ENCODE measurements at regions of chr9 and their contacts with region 1.

Region 1: GRCh38 chr9:131733541-131734061 is 6.3 kb downstream of the RAPGEF1 start:
- DNase-seq: no peak
- ATAC-seq: no peak
- H3K4me3 Mint-ChIP-seq: peak overlapping the region; percentile 79
- H3K27ac Mint-ChIP-seq: peak overlapping the region; percentile 89
- H3K4me1 Mint-ChIP-seq: peaks cover 92% of the 10 kb centered on the region
- H3K27me3 Mint-ChIP-seq: no peaks in the 10 kb centered on the region
- CTCF ChIP-seq: no peak

Region 2: DNA sequence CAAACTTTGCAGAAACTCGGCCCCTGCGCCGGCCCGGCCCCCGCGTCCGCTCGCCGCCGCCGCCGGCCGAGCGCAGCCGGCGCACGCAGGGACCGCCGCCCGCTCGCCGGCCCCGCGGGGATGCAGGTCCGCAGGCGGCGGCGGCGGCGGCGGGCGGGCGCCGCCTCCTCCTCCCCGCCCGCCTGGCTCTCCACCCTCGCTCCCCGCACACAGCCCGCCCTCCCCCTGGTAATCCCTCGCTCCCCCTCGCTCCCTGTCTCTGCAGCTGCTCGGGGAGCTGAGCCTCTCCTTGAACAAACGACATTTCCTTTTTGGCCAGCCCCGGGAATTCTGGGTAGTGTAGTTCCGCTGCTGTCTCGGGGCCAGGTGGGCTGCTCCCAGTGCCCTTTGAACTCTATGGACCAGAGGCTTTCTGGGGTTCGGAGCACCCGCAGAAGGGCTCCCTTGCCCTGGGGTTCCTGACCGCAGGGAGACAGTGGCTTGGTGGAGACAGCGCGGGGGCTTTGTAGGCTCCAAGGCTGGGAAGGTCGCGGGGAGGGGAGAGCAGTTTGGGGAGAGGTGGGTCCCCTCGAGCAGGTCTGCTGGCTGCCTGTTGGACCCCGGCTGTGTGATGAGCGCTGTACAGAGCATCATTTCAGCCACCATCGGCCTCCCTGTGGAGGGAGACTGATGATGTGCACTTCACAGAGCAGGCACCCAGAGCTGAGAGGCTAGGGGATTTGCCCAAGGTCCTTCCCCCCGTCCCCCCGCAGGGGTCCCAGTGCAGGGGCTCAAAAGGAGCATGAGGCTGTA is 455.5 kb before region 1 on chr9:
- CTCF ChIA-PET with region 1: no interaction called
- POLR2A ChIA-PET with region 1: no interaction called
- intact Hi-C with region 1: loop called (anchors 10 kb)
- DNase-seq: peak; percentile 48
- ATAC-seq: peak; percentile 48
- H3K4me3 Mint-ChIP-seq: peak overlapping the region; percentile 91
- H3K27ac Mint-ChIP-seq: peak overlapping the region; percentile 80
- H3K4me1 Mint-ChIP-seq: peaks cover 37% of the 10 kb centered on the region
- H3K27me3 Mint-ChIP-seq: peaks cover 12% of the 10 kb centered on the region
- CTCF ChIP-seq: no peak

Region 3: DNA sequence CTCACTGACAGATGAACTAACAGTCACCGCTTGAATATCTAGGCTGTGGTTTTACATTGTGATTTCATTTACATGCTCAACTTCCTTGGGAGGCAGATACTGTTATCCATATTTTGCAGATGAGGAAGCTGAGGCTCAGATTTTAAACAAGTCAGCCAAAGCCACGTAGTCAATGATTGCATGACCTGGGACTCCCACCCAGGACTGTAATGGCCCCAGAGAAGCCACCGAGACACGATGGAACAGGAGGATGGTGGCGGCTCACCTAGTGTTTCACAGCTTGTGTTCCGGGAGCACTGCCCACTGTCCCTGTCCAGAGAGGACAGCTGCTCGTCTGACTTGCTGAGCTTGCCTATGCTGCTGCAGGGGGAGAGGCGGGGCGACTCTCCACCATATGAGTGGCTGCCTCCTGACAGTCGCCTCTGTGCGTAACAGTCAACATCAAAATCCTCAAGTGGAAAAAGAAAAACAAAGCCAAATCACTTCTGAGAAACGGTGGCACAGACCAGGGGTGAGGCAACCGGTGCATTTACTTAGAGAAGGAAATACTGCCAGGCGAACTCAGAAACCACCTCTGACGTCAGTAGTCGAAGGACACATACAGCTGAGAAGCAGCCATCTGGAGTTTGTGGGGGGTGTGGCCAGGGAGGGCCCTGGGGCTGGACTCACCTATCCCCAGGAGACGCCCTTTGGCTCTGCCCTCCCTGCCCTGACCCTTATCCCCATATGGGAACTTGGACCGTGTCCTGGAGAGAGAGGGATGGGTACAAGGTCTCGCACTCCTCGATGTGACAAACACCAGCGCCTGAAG is 105.7 kb before region 1 on chr9:
- CTCF ChIA-PET with region 1: interaction called, 36 read pairs
- POLR2A ChIA-PET with region 1: interaction called, 567 read pairs
- intact Hi-C with region 1: loop called (anchors 1 kb)
- DNase-seq: peak; percentile 55
- ATAC-seq: peak; percentile 68
- H3K4me3 Mint-ChIP-seq: peak overlapping the region; percentile 74
- H3K27ac Mint-ChIP-seq: peak overlapping the region; percentile 93
- H3K4me1 Mint-ChIP-seq: peaks cover 71% of the 10 kb centered on the region
- H3K27me3 Mint-ChIP-seq: no peaks in the 10 kb centered on the region
- CTCF ChIP-seq: no peak

Region 4: DNA sequence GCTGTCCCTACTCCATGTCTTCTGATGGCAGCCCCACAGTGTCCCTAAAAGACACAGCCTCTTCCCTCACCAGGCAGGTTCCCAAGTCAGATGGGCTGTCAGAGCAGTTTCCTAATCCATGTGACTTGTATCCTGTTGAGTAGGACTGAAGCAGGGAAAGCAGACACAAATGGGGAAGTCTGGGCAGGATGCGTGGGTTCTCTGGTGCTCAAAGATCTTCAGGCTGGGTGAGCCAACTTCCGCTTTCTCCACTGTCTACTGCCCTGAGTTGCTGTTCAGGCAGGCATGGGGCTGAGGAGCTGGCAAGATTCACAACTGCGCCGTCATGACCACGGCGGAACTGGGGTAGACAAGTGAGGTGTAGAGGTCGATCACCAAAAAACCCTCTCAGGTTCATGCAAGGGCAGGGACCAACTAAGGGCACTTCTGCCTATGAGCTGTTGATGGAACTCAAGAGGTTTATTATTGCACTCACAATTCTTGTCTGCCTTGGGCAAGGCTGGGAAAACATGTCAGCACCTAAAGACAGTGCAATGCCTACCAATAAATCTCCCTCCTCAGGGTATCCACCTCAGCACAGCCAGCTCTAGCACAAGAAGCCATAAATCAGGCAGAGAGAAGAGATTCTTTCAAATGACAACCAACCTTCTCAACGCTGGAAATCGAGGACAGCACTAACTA is 77.1 kb before region 1 on chr9:
- CTCF ChIA-PET with region 1: interaction called, 6 read pairs
- POLR2A ChIA-PET with region 1: interaction called, 28 read pairs
- intact Hi-C with region 1: loop called (anchors 1 kb)
- DNase-seq: peak; percentile 70
- ATAC-seq: peak; percentile 97
- H3K4me3 Mint-ChIP-seq: peak overlapping the region; percentile 62
- H3K27ac Mint-ChIP-seq: peak overlapping the region; percentile 93
- H3K4me1 Mint-ChIP-seq: peaks cover 93% of the 10 kb centered on the region
- H3K27me3 Mint-ChIP-seq: no peaks in the 10 kb centered on the region
- CTCF ChIP-seq: no peak

Region 5: DNA sequence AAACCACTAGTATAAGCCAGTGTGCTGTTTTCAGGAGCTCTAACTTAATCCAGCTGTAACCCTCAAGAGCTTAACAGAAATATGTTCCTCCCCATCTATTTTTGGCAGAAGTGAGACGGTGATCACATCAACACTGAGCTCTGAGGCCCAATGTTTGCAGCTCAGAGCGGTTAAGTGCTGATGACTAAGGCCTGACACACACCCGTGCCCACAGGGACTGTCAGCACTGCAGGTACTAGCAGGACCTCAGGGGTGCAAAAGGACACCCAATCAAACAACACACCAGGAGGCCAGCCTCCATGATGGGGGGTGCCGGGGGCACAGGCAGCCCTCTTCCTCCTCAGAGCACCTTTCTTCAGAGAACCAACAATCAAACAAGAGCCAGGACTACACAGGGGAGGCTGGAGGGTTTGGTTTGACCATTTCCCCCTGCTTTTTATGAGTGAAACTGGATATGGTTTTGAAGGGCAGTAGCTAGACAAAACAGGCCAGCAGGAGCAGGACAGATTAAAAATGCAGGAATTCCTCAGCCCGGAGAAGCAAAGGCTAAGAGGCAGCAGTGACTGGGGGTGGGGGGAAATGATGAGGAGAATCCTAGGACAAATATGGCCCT is 55.0 kb before region 1 on chr9:
- CTCF ChIA-PET with region 1: interaction called, 44 read pairs
- POLR2A ChIA-PET with region 1: interaction called, 683 read pairs
- intact Hi-C with region 1: loop called (anchors 1 kb)
- DNase-seq: peak; percentile 63
- ATAC-seq: peak; percentile 90
- H3K4me3 Mint-ChIP-seq: peak overlapping the region; percentile 93
- H3K27ac Mint-ChIP-seq: peak overlapping the region; percentile 93
- H3K4me1 Mint-ChIP-seq: peaks cover 98% of the 10 kb centered on the region
- H3K27me3 Mint-ChIP-seq: no peaks in the 10 kb centered on the region
- CTCF ChIP-seq: no peak

Region 6: DNA sequence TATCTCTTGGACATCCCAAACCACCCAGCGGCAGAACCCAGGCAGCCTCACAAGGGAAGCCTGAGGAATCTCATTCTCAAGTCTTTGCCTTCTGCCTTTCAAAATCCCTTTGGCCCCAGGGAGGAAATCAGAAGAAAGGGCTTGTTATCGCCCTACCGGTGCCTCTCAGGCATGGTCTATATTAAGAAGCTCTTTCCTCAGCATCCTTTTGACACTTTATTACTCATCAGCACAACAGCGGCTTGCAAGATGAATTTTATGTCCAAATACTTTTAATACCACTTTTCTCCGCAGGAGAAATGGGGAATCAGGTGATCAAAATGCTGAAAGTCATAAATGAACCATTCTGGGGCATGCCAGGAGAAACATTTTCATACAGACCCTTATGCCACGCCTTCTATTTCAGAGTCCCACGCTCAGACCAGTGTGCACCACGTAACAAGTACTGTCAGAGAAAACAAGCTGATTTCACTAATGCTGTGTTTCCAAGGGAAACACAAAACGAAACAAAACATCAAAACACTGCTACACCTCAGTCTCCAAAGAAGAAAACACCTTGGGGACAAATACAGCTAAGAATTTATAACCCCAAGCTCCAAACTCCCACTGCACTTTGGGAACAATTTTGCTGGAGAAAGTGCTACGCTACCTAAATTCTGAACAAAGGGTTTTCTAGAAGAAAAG is 23.7 kb before region 1 on chr9:
- CTCF ChIA-PET with region 1: no interaction called
- POLR2A ChIA-PET with region 1: interaction called, 17 read pairs
- intact Hi-C with region 1: loop called (anchors 2 kb)
- DNase-seq: no peak
- ATAC-seq: peak; percentile 49
- H3K4me3 Mint-ChIP-seq: peak overlapping the region; percentile 44
- H3K27ac Mint-ChIP-seq: peak overlapping the region; percentile 70
- H3K4me1 Mint-ChIP-seq: peaks cover 92% of the 10 kb centered on the region
- H3K27me3 Mint-ChIP-seq: no peaks in the 10 kb centered on the region
- CTCF ChIP-seq: no peak

Region 7: DNA sequence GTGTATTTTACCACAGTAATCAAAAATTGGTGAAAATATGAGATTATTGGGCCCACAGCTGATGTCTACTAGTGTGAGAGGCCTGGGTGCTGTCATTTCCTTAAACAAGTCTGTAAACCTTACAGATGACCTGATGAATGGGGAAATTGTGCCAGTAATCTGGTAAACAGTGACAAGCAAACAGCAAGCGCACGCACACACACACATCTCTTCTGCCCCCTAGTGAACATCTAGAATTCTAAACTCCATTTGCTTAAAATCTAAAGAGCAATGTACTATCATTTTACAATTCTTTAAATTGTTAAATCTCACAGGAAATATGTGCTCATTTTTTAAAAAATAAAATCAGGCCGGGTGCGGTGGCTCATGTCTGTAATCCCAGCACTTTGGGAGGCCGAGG is 13.8 kb after region 1 on chr9:
- CTCF ChIA-PET with region 1: interaction called, 3 read pairs
- POLR2A ChIA-PET with region 1: interaction called, 14 read pairs
- intact Hi-C with region 1: no loop called
- DNase-seq: no peak
- ATAC-seq: peak; percentile 55
- H3K4me3 Mint-ChIP-seq: no peak overlapping the region
- H3K27ac Mint-ChIP-seq: no peak overlapping the region
- H3K4me1 Mint-ChIP-seq: peaks cover 27% of the 10 kb centered on the region
- H3K27me3 Mint-ChIP-seq: no peaks in the 10 kb centered on the region
- CTCF ChIP-seq: no peak

Region 8: GRCh38 chr9:131769356-131769755 is 35.8 kb after region 1 on chr9:
- CTCF ChIA-PET with region 1: no interaction called
- POLR2A ChIA-PET with region 1: no interaction called
- intact Hi-C with region 1: no loop called
- DNase-seq: no peak
- ATAC-seq: no peak
- H3K4me3 Mint-ChIP-seq: no peak overlapping the region
- H3K27ac Mint-ChIP-seq: no peak overlapping the region
- H3K4me1 Mint-ChIP-seq: no peaks in the 10 kb centered on the region
- H3K27me3 Mint-ChIP-seq: peaks cover 28% of the 10 kb centered on the region
- CTCF ChIP-seq: no peak

Region 9: DNA sequence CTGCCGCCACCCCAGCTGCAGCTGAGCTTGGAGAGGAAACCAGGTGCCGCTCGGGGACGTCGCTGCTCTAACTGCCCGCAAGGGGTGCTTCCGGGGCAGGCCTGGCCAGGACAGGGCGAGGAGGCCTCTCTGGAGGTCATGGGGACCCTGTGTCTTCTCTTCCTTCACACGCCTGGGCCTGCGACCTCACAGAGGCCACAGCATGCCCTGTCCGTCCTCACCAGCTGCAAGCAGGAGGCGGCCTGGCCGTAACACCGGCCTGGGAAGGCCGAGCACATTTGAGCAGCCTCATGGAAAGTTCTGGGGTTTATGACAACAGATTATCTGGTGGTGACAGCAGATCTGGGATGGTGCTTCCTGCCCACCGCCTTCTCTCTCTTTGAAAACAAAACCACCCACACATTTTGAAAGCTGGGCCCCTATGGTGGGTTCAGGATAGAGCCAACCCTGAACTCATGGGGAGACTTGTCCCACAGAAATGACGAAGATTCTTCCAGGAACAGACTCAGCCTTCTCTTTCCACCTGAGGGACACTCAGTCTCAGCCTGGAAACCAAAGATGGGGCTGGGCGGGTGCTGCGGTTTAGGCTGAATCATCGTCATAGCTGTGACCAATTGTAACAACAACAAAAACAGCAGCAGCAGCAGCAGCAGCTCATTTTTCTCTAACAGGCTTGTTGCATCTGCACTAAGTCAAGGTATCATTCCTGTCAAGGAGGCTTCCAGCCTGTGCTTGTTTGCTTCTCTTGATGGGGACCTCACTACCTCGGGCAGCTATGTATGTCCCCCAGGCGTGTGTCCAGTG is 105.9 kb after region 1 on chr9:
- CTCF ChIA-PET with region 1: no interaction called
- POLR2A ChIA-PET with region 1: no interaction called
- intact Hi-C with region 1: no loop called
- DNase-seq: no peak
- ATAC-seq: no peak
- H3K4me3 Mint-ChIP-seq: no peak overlapping the region
- H3K27ac Mint-ChIP-seq: no peak overlapping the region
- H3K4me1 Mint-ChIP-seq: no peaks in the 10 kb centered on the region
- H3K27me3 Mint-ChIP-seq: peaks cover 16% of the 10 kb centered on the region
- CTCF ChIP-seq: no peak

Measured in activated B cell treated with CpG ODN at 0.5 μM for 24 hours (primary cell).